Natural killer cell (primary cell): ENCODE measurements at regions of chr1 and their contacts with region 1.

Region 1: DNA sequence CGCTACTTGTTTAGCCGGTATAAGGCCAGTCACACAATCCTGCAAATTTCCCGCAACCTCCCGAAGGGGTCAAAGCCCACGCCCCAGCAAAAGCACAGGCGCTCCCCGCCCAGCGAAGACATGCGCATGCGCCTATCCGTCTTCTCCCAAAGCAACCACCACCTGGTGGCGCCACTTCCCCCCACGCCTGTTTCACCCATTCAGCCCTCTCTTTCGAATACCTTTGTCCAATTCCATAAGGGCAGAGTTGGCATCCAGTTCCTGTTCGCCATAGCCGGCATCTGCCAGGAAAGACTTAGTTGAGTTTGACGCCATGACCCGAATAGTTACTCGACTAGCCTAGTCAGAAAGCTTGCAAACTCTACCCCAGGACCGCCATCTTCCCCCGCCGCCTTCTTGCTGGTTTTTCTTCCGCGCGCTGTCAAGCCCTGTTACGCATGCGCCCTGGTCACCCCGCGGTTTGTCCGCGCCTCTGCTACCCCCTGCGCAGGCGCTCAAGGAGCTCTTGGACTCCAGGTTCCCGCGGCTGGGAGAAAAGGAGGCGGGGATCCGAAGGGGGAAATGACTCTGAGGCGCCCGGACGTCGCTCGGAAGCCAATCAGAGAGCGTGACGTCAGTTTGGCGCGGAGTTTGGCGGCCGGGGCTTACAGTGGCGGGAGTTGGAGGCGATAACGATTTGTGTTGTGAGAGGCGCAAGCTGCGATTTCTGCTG is at the starts of genes DTL and INTS7:
- DNase-seq: peak; percentile 95 to 100
- ATAC-seq: peak; percentile 89 to 94 (median 90)
- H3K4me3 ChIP-seq: peak within 1 kb of the TSS; percentile 75
- H3K4me3 Mint-ChIP-seq: peak within 1 kb of the TSS; percentile 96
- H3K27ac ChIP-seq: peak within 1 kb of the TSS; percentile 65
- H3K27ac Mint-ChIP-seq: peak within 1 kb of the TSS; percentile 94 to 98
- H3K4me1 ChIP-seq: peaks cover 14% of the 10 kb centered on the region
- H3K4me1 Mint-ChIP-seq: peaks cover 42 to 51% of the 10 kb centered on the region in 2 donors
- H3K27me3 ChIP-seq: no peaks in the 10 kb centered on the region
- H3K27me3 Mint-ChIP-seq: no peaks in the 10 kb centered on the region
- CTCF ChIP-seq: peak; percentile 95
- total RNA-seq, gene DTL: 1.1 to 4.0 (median 3.3) TPM
- total RNA-seq, gene INTS7: 10.0 to 20.3 (median 11.0) TPM

Region 2: DNA sequence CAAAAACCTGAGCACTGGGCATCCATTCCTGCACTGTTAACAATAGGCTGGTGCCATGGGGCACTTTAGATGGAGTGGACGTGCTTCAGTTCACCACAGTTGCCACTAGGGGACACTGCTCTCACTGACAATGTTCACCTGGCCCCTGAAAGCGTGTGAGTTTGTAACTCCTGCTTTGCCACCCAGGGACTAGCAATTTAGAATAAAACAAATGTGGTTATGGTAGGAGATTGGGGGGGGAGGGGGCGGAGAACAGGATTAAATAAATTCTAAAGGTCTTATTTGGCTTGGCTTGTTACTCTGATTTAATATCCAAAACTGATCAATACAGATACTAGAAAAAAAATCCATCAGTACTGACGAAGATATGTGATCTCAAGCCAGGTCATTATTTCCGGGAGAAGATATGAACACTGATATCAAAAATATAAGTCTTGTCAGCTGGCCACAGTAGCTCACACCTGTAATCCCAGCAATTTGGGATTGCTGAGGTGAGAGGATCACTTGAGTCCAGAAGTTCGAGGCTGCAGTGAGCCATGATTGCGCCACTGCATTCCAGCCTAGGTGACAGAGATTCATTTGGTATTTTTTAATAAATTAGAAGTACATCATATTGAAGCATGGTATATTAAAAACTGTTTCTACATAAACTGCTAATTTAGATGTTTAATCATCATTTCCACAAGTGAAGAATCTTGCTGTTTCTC is 23.1 kb before region 1 on chr1:
- intact Hi-C with region 1: loop called (anchors 1 kb)
- DNase-seq: peak; percentile 39 to 82
- ATAC-seq: peak; percentile 93 to 100 (median 100)
- H3K4me3 ChIP-seq: no peak overlapping the region
- H3K4me3 Mint-ChIP-seq: no peak overlapping the region
- H3K27ac ChIP-seq: no peak overlapping the region
- H3K27ac Mint-ChIP-seq: peak overlapping the region in 1 of 2 donors; percentile 59
- H3K4me1 ChIP-seq: no peaks in the 10 kb centered on the region
- H3K4me1 Mint-ChIP-seq: peaks cover 0 to 6% of the 10 kb centered on the region in 2 donors
- H3K27me3 ChIP-seq: no peaks in the 10 kb centered on the region
- H3K27me3 Mint-ChIP-seq: no peaks in the 10 kb centered on the region
- CTCF ChIP-seq: peak; percentile 84

Region 3: DNA sequence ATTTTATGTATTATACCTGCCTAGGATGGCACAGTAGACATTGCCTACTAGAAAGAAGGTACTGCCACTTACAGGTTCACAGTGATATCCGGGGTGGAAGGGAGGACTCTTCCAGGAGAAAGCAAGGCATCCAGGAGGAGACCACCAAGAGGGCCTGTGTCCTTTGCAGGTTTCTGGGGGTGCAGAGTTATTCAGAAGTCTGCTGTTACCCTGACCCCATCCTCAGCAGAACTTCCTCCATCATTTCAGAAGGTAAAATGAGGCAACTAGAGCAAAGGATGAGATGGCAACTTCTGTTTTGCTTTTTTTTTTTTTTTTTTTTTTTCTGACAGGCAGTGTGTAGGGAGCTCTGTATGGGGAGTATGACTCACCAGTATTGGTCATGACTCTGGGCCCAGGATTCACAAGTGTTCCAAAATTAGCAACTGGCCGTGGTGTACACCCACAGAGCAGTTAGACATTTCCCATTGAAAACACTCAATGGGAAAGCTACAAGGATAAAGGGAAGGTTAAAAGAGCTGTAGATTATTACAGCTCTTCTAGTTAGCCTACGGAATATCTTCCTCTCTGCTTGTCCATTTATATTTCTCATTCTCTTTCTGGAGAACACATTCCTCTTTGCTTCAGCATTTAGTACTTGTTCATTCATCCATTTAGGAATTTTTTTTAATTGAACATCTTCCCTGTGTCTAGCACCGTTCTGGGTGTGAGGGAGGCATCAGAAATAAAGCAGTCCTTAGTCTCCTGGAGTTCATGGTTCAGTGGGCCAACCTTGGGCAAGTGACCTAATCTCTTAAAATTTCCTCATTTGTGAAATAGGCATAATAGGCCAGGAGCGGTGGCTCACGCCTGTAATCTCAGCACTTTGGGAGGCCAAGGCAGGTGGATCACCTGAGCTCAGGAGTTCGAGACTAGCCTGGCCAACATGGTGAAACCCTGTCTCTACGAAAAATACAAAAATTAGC is 199.4 kb after region 1 on chr1:
- intact Hi-C with region 1: no loop called
- DNase-seq: peak in 1 of 2 donors; percentile 14
- ATAC-seq: peak; percentile 72 to 87 (median 74)
- H3K4me3 ChIP-seq: no peak overlapping the region
- H3K4me3 Mint-ChIP-seq: no peak overlapping the region
- H3K27ac ChIP-seq: no peak overlapping the region
- H3K27ac Mint-ChIP-seq: peak overlapping the region in 1 of 2 donors; percentile 57
- H3K4me1 ChIP-seq: peaks cover 22% of the 10 kb centered on the region
- H3K4me1 Mint-ChIP-seq: peaks cover 42 to 64% of the 10 kb centered on the region in 2 donors
- H3K27me3 ChIP-seq: no peaks in the 10 kb centered on the region
- H3K27me3 Mint-ChIP-seq: no peaks in the 10 kb centered on the region
- CTCF ChIP-seq: no peak